Activated B cell treated with CpG ODN at 0.5 μM for 24 hours (primary cell): ENCODE measurements at regions of chr13 and their contacts with region 1.

Region 1: DNA sequence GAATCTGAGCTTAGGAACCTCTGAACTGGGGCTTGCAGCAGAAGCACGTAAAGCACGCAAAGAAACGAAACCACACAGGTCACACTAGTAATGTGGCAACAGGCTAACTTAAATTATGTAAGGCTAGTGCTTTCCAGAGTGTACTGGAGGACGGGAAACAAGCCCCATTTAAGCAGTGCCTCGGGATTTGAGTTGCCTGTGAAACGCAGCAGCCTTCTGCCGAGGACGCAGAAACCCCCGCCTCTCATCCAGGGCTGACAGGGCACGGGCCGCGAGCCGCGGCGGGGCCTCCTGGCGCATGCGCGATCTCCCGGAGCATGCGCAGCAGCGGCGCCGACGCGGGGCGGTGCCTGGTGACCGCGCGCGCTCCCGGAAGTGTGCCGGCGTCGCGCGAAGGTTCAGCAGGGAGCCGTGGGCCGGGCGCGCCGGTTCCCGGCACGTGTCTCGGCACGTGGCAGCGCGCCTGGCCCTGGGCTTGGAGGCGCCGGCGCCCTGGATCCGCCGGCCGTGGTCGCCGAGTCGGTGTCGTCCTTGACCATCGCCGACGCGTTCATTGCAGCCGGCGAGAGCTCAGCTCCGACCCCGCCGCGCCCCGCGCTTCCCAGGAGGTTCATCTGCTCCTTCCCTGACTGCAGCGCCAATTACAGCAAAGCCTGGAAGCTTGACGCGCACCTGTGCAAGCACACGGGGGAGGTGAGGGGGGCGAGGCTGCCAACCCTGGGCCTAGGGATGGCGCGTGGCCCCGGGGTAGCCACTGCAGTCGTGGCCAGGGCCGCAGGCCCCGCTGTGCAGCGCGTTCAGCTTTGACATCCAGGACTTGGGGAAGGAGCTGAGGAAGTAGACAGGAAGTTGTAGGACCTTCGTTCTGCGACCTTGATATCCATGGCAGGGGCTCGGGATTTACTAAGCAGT is at the start of gene GTF3A:
- DNase-seq: peak; percentile 91
- ATAC-seq: peak; percentile 72
- H3K4me3 Mint-ChIP-seq: peak within 1 kb of the TSS; percentile 79
- H3K27ac Mint-ChIP-seq: peak within 1 kb of the TSS; percentile 86
- H3K4me1 Mint-ChIP-seq: peaks cover 42% of the 10 kb centered on the region
- H3K27me3 Mint-ChIP-seq: no peaks in the 10 kb centered on the region
- CTCF ChIP-seq: no peak
- total RNA-seq, gene GTF3A: 119 and 134 TPM in 2 replicates

Region 2: DNA sequence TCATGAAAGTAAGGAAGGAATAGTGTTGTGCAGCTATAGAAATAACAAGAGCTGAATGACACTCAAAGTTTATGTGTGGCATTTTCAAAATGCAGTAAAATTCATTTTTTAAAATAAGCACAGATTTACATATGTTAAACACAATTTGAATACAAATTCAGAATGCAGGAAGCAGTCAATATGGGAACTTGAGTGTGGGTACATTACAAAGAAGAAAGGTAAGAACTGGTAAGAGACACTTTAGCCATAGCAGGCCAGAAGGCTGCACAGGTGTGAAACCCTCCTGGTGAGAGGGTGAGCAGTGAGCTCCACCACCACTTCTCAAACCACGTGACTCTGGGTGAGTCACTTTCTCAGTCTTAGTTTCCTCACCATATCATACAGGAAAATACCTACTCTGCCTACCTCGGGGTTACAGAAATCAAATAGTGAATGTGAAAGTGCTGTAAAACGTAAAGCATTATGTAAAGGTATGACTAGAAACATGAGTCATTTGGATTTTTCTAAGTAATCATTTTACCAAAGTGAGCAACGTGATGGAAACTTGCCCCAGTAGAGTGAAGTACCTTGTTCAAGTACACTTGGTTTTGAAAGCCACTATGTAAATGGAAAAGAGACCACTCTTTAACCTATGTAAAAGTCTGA is 293.4 kb before region 1 on chr13:
- CTCF ChIA-PET with region 1: no interaction called
- POLR2A ChIA-PET with region 1: no interaction called
- intact Hi-C with region 1: loop called (anchors 10 kb)
- DNase-seq: peak; percentile 28
- ATAC-seq: peak; percentile 88
- H3K4me3 Mint-ChIP-seq: peak overlapping the region; percentile 2
- H3K27ac Mint-ChIP-seq: peak overlapping the region; percentile 88
- H3K4me1 Mint-ChIP-seq: peaks cover 91% of the 10 kb centered on the region
- H3K27me3 Mint-ChIP-seq: no peaks in the 10 kb centered on the region
- CTCF ChIP-seq: no peak

Region 3: DNA sequence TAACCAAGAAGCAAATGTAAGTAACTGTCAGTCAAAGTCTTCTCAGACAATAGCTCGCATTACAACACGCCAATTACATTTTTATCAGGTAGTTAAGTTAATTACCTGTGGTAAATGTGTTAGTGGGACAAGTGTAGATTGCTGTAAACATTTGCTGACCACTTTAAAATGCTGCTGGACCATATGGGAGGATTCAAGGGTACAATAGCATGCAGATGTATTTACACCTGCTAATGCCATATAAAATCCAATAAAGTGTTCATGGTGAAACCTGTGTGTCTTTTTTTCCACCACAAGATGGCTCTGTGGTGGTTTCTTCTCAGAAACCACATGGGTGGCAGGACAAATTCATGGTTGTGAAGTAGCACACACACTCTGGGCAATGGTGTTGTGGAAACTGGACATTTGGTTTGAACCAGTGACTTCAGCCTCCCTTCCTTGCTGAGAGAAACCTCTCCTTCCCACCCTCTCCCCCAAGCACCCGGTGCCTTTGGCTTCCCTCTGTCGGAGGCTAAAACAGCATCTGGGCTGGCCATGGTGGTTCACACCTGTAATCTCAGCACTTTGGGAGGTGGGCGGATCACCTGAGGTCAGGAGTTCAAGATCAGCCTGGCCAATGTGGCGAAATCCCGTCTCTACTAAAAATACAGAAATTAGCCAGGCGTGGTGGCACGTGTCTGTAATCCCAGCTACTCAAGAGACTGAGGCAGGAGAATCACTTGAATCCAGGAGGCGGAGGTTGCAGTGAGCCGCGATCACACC is 18.1 kb before region 1 on chr13:
- CTCF ChIA-PET with region 1: interaction called, 3 read pairs
- POLR2A ChIA-PET with region 1: interaction called, 3 read pairs
- intact Hi-C with region 1: loop called (anchors 1 kb)
- DNase-seq: no peak
- ATAC-seq: peak; percentile 54
- H3K4me3 Mint-ChIP-seq: no peak overlapping the region
- H3K27ac Mint-ChIP-seq: no peak overlapping the region
- H3K4me1 Mint-ChIP-seq: peaks cover 9% of the 10 kb centered on the region
- H3K27me3 Mint-ChIP-seq: peaks cover 8% of the 10 kb centered on the region
- CTCF ChIP-seq: no peak

Region 4: GRCh38 chr13:27442071-27442647 is 17.7 kb after region 1 on chr13:
- CTCF ChIA-PET with region 1: interaction called, 28 read pairs
- POLR2A ChIA-PET with region 1: interaction called, 185 read pairs
- intact Hi-C with region 1: loop called (anchors 1 kb)
- DNase-seq: no peak
- ATAC-seq: peak; percentile 12
- H3K4me3 Mint-ChIP-seq: peak overlapping the region; percentile 74
- H3K27ac Mint-ChIP-seq: peak overlapping the region; percentile 77
- H3K4me1 Mint-ChIP-seq: peaks cover 65% of the 10 kb centered on the region
- H3K27me3 Mint-ChIP-seq: no peaks in the 10 kb centered on the region
- CTCF ChIP-seq: no peak

Region 5: GRCh38 chr13:27455331-27455855 is 30.9 kb after region 1 on chr13:
- CTCF ChIA-PET with region 1: interaction called, 13 read pairs
- POLR2A ChIA-PET with region 1: interaction called, 185 read pairs
- intact Hi-C with region 1: loop called (anchors 1 kb)
- DNase-seq: no peak
- ATAC-seq: peak; percentile 41
- H3K4me3 Mint-ChIP-seq: peak overlapping the region; percentile 87
- H3K27ac Mint-ChIP-seq: peak overlapping the region; percentile 94
- H3K4me1 Mint-ChIP-seq: peaks cover 31% of the 10 kb centered on the region
- H3K27me3 Mint-ChIP-seq: no peaks in the 10 kb centered on the region
- CTCF ChIP-seq: no peak

Region 6: GRCh38 chr13:27620377-27621115 is 196.0 kb after region 1 on chr13 and contains the start of gene LNX2:
- CTCF ChIA-PET with region 1: interaction called, 3 read pairs
- POLR2A ChIA-PET with region 1: interaction called, 33 read pairs
- intact Hi-C with region 1: loop called (anchors 1 kb)
- DNase-seq: peak; percentile 97
- ATAC-seq: peak; percentile 87
- H3K4me3 Mint-ChIP-seq: peak within 1 kb of the TSS; percentile 93
- H3K27ac Mint-ChIP-seq: peak within 1 kb of the TSS; percentile 93
- H3K4me1 Mint-ChIP-seq: peaks cover 54% of the 10 kb centered on the region
- H3K27me3 Mint-ChIP-seq: no peaks in the 10 kb centered on the region
- CTCF ChIP-seq: no peak
- total RNA-seq, gene LNX2: 6.1 and 7.1 TPM in 2 replicates